Posterior cingulate gyrus (tissue), 11 donors: ENCODE measurements at regions of chr6 and their contacts with region 1.

Region 1: GRCh38 chr6:110944681-110945151 is 13.8 kb upstream of the GTF3C6 start:
- DNase-seq: peak in 5 of 10 donors; percentile 17 to 82 (median 34)

Region 2: DNA sequence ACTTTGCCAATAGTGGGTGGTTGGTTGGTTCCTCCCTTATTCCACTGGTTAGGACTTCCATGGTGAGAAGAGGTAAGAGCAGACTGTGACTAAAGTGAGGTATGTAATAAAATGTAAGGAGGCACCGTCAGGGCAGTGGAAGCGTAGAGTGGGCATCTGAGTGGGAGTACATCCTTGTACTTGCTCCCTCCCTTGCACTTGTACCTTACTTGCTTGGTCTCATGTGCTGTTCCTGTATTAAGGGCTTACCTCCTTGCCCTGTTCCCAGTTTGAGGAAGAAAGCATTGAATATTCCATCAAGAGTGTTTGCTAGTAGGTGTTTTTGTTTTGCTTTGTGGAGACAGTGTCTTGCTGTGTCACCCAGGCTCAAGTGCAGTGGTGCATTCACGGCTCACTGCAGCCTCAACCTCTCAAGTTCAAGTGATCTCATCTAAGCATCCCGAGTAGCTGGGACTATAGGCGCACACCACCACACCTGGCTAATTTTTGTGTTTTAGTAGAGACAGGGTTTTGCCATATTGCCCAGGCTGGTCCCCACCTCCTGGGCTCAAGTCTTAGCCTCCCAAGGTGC is 44.6 kb before region 1 on chr6:
- intact Hi-C with region 1: loop called (anchors 5 kb)
- DNase-seq: no peak